Activated naive CD4-positive, alpha-beta T cell treated with anti-CD3 and anti-CD28 coated beads for 36 hours (primary cell): ENCODE measurements at regions of chr5 and their contacts with region 1.

Region 1: GRCh38 chr5:133868946-133869518 is 99.4 kb downstream of the C5orf15 start:
- DNase-seq: peak; percentile 93
- H3K4me3 Mint-ChIP-seq: no peak overlapping the region
- H3K27ac Mint-ChIP-seq: peak overlapping the region; percentile 44
- H3K4me1 Mint-ChIP-seq: peaks cover 40% of the 10 kb centered on the region
- H3K27me3 Mint-ChIP-seq: no peaks in the 10 kb centered on the region

Region 2: DNA sequence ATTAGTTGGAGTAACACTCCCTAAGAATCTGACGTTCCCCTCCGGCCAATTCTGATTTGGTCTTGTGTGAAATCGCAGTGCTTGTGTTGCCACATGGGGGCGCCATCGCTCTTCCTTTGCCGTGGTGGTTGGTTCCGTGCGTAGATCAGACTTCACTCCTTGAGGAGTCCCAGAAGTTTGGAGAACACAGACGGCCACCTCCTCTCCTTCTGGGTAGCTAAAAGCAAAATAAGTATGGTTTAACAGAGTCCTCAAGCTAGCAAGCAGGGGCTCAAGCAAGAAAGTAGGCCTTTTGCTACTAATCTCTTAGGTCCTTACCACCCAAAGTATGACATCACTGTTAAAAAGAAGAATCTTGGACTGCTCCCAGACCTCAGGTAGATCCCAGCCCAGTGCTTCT is 757.7 kb before region 1 on chr5:
- CTCF ChIA-PET with region 1: interaction called, 4 read pairs
- intact Hi-C with region 1: loop called (anchors 2 kb)
- DNase-seq: peak; percentile 89
- H3K4me3 Mint-ChIP-seq: no peak overlapping the region
- H3K27ac Mint-ChIP-seq: no peak overlapping the region
- H3K4me1 Mint-ChIP-seq: peaks cover 21% of the 10 kb centered on the region
- H3K27me3 Mint-ChIP-seq: no peaks in the 10 kb centered on the region

Region 3: DNA sequence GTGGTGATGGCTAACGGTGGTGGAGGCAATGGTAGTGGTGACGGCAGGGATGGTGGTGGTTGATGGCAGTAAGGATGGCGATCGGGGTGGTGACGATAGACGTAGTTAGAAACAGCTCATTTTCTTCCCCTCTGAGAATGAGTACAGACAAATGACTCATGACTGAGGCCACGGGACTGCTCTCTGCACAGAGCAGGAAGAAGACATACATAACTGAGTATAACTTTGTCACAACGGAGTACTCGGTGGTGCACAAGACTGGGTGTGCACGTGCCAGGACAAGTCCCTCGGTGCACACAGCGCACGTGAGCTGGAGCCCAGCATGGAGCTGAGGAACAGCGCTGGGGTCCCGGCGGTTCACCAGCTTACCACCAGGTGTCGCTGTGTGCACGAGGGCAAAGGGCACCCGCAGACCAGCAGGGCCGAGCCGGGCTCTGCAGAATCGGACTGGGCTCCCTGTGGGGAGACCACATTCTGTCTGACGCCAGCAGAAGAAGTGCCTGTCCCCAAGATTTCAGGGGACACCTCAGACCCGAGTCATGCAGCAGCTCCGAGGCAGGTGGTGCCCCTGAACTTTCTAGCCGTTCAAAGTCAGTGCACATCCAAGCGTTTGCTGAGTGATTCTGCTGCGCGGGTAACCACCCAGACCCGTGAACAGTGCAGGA is 445.3 kb before region 1 on chr5:
- CTCF ChIA-PET with region 1: interaction called, 6 read pairs
- intact Hi-C with region 1: loop called (anchors 5 kb)
- DNase-seq: peak; percentile 79
- H3K4me3 Mint-ChIP-seq: no peak overlapping the region
- H3K27ac Mint-ChIP-seq: no peak overlapping the region
- H3K4me1 Mint-ChIP-seq: peaks cover 10% of the 10 kb centered on the region
- H3K27me3 Mint-ChIP-seq: no peaks in the 10 kb centered on the region

Region 4: DNA sequence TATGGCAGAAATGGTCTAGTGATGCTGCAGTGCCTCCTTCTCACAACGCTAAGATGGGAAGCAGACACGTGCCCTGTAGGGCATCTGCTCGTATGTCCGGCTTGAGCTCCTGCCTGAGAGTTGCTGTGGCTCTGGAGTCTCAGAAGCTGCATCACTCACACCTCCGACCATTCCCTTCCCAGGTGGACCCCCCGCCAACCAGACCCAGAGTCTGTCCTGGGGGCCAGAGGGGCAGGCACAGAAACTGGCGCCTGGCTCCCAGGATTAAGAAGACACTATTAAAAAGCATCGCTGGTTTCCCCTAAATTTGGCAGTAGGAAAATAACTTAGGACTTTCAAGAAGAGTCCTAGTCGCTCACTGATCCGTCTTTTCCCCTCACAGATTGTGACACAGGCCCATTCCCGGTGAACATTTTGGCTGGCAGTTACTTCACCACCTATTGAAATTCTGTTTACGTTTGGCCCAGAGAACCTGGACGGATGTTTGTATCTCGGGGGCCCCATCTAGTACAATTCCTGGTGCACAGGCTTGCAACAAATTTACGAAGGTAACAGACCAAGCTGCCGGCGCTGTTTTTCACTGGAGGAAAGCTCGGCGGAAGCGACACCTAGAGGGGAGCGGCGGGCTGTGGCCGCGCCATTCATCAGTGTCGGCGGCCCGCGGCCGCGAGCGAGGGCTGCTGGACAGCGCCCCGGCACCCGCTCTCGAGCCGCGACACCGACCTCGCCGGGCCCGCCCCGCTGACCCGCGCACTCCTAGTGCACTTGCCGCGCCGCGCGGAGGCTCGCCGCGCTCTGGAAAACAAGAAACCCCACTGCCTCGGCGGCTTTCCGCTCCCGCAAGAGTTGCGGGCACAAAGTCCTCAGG is 258.3 kb before region 1 on chr5:
- CTCF ChIA-PET with region 1: no interaction called
- intact Hi-C with region 1: loop called (anchors 1 kb)
- DNase-seq: peak; percentile 69
- H3K4me3 Mint-ChIP-seq: peak overlapping the region; percentile 51
- H3K27ac Mint-ChIP-seq: no peak overlapping the region
- H3K4me1 Mint-ChIP-seq: peaks cover 12% of the 10 kb centered on the region
- H3K27me3 Mint-ChIP-seq: peaks cover 52% of the 10 kb centered on the region

Region 5: GRCh38 chr5:133754575-133755169 is 114.4 kb before region 1 on chr5:
- CTCF ChIA-PET with region 1: interaction called, 8 read pairs
- intact Hi-C with region 1: loop called (anchors 1 kb)
- DNase-seq: peak; percentile 66
- H3K4me3 Mint-ChIP-seq: no peak overlapping the region
- H3K27ac Mint-ChIP-seq: no peak overlapping the region
- H3K4me1 Mint-ChIP-seq: no peaks in the 10 kb centered on the region
- H3K27me3 Mint-ChIP-seq: peaks cover 18% of the 10 kb centered on the region

Region 6: GRCh38 chr5:133930061-133930812 is 61.2 kb after region 1 on chr5:
- CTCF ChIA-PET with region 1: interaction called, 11 read pairs
- intact Hi-C with region 1: loop called (anchors 1 kb)
- DNase-seq: peak; percentile 88
- H3K4me3 Mint-ChIP-seq: peak overlapping the region; percentile 80
- H3K27ac Mint-ChIP-seq: peak overlapping the region; percentile 97
- H3K4me1 Mint-ChIP-seq: peaks cover 45% of the 10 kb centered on the region
- H3K27me3 Mint-ChIP-seq: no peaks in the 10 kb centered on the region

Region 7: DNA sequence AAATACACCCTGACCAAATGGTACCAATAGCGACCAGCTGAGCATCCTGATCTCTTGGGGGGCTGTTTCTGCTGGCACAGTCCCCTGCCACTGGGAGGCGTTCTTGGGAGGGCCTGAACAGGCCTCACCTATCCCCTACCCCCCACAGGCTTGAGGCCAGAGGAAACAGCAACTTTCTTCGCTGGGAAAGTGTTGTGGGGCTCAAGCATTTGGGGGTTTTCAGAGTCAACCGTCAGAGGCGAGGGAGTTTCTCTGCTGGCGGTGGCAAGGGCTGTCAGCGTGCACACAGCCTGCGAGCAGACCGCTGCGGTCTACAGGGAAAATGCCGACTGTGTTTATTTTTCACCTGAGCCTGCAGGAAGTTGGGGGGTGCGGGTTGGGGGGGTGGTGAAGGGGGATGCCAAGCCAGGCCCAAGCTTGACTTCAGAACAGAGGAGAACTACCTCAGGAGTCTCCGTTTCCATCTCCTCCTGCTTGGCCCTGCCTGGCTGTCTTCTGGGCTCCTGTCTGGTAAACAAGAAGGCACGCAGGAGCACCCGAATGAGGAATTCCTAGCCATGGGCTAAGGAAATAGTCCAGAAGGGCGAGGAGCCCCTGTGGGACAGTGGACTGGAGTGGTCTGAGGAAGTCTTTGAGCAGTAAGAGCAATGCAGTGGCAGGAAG is 263.5 kb after region 1 on chr5:
- CTCF ChIA-PET with region 1: no interaction called
- intact Hi-C with region 1: loop called (anchors 5 kb)
- DNase-seq: peak; percentile 93
- H3K4me3 Mint-ChIP-seq: peak overlapping the region; percentile 36
- H3K27ac Mint-ChIP-seq: peak overlapping the region; percentile 90
- H3K4me1 Mint-ChIP-seq: peaks cover 99% of the 10 kb centered on the region
- H3K27me3 Mint-ChIP-seq: no peaks in the 10 kb centered on the region